MCF 10A (cell line): ENCODE measurements at regions of chr10 and their contacts with region 1.

Region 1: GRCh38 chr10:87761892-87762291 is 56.1 kb downstream of the ATAD1 start:
- DNase-seq: peak; percentile 87
- H3K4me3 Mint-ChIP-seq: no peak overlapping the region
- H3K27ac Mint-ChIP-seq: peak overlapping the region; percentile 54
- H3K4me1 Mint-ChIP-seq: peaks cover 5% of the 10 kb centered on the region
- H3K27me3 Mint-ChIP-seq: no peaks in the 10 kb centered on the region
- CTCF ChIP-seq: no peak

Region 2: DNA sequence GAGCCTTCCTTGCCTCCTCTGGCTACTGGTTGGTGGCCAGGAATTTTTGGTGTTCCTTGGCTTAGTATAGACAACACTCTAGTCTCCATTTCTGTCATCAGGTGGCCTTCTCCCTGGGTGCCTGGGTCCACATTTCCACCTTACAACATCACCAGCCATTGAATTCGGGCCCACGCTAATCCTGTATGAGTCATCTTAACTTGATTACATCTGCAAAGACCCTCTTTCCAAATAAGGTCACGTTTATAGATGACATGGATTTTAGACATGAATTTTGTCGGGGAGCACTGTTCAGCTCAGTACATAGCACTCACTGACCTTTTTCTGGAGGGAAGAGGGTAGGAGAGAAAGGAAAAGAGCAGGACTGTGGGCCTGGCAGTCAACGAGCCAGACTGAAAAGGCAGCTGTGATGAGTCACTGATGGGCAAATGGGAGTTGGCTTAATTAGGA is 843.8 kb before region 1 on chr10:
- CTCF ChIA-PET with region 1: no interaction called
- POLR2A ChIA-PET with region 1: no interaction called
- intact Hi-C with region 1: no loop called
- DNase-seq: peak; percentile 61
- H3K4me3 Mint-ChIP-seq: no peak overlapping the region
- H3K27ac Mint-ChIP-seq: peak overlapping the region; percentile 40
- H3K4me1 Mint-ChIP-seq: peaks cover 10% of the 10 kb centered on the region
- H3K27me3 Mint-ChIP-seq: no peaks in the 10 kb centered on the region
- CTCF ChIP-seq: no peak

Region 3: DNA sequence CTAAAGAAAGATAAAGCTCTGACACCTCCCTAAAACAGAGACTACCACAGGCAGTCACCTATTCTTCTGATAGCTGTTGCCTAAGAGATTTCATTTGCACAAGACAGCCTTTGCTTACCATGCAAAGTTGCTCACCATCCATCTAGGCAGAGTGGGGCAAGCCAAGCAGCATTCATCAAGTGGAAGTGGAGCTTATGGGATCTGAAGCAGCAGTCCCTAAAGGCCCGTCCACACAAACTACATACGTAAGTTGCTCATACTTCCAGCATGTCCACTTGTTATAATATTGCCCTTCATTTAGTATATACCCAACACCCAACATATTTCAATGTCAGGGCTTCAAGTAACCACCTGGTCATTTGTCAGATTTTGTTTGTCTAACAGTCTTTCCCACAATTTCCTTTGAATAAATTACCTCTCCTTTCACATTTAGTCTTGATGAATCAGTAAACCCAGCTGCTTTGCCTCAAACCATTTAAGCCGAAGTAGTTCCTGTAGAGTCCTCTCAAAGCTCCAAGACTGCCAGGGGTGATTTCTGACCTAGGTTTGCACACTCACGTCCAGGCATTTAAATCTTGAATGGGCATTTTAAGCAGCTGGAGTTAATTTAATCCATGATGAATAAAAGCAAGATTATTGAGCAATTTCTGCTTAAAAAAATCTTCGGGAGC is 11.8 kb before region 1 on chr10:
- CTCF ChIA-PET with region 1: interaction called, 3 read pairs
- POLR2A ChIA-PET with region 1: interaction called, 12 read pairs
- intact Hi-C with region 1: no loop called
- DNase-seq: no peak
- H3K4me3 Mint-ChIP-seq: no peak overlapping the region
- H3K27ac Mint-ChIP-seq: no peak overlapping the region
- H3K4me1 Mint-ChIP-seq: peaks cover 10% of the 10 kb centered on the region
- H3K27me3 Mint-ChIP-seq: no peaks in the 10 kb centered on the region
- CTCF ChIP-seq: no peak